Endothelial cell of umbilical vein (primary cell): ENCODE measurements at regions of chr5 and their contacts with region 1.

Region 1: DNA sequence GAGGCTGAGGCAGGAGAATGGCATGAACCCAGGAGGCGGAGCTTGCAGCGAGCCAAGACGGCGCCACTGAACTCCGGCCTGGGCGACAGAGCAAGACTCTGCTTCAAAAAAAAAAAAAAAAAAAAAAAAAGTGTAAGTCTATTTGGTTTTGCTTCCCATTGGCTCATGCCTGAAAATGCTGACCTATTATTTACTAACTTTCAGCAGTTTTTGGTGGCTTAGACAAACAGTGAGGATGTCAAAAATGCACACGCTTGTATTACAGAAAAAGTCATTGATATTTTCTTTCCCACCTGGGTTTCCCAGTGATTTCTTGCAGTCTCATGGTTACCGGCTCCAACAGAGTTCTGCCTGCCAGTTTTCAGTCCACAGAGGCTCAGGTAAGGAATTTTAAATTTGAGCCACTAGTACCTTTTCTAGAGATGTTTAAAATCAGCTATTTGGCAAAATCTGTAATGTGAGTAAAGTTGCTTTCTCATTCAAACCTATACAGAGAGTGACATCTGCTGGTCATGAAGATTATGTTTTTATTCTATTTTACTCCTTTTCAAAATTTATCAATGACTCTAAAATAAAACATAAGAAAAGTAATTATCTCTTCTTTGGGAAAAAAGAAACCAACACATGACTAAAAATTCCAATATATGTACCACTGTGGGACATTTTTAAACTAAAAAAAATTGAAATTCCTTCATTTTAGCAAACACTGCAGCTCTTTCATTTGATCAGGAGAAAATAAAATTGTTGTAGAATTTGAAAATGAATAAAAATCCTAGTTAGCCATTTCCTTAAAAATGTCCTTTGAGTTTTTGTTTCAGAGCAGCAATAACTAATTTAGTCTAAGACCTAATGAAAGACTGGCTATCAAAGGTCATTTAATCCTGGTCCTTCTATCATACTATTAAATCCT is 8.8 kb downstream of the FAM200C start:
- DNase-seq: peak; percentile 30
- H3K4me3 ChIP-seq: no peak overlapping the region
- H3K27ac ChIP-seq: no peak overlapping the region
- H3K4me1 ChIP-seq: no peaks in the 10 kb centered on the region
- H3K27me3 ChIP-seq: no peaks in the 10 kb centered on the region
- CTCF ChIP-seq: peak; percentile 11 to 20
- POLR2A ChIP-seq: no peak

Region 2: GRCh38 chr5:159987031-159987674 is 403.9 kb before region 1 on chr5:
- CTCF ChIA-PET with region 1: interaction called, 13 read pairs
- POLR2A ChIA-PET with region 1: no interaction called
- dilution Hi-C with region 1: no loop called
- intact Hi-C with region 1: no loop called
- DNase-seq: peak; percentile 58
- H3K4me3 ChIP-seq: peak overlapping the region in 2 of 3 experiments; percentile 10 to 15
- H3K27ac ChIP-seq: no peak overlapping the region
- H3K4me1 ChIP-seq: peaks cover 2% of the 10 kb centered on the region
- H3K27me3 ChIP-seq: peaks cover 36 to 37% of the 10 kb centered on the region in 2 experiments
- CTCF ChIP-seq: peak; percentile 62 to 87
- POLR2A ChIP-seq: no peak

Region 3: DNA sequence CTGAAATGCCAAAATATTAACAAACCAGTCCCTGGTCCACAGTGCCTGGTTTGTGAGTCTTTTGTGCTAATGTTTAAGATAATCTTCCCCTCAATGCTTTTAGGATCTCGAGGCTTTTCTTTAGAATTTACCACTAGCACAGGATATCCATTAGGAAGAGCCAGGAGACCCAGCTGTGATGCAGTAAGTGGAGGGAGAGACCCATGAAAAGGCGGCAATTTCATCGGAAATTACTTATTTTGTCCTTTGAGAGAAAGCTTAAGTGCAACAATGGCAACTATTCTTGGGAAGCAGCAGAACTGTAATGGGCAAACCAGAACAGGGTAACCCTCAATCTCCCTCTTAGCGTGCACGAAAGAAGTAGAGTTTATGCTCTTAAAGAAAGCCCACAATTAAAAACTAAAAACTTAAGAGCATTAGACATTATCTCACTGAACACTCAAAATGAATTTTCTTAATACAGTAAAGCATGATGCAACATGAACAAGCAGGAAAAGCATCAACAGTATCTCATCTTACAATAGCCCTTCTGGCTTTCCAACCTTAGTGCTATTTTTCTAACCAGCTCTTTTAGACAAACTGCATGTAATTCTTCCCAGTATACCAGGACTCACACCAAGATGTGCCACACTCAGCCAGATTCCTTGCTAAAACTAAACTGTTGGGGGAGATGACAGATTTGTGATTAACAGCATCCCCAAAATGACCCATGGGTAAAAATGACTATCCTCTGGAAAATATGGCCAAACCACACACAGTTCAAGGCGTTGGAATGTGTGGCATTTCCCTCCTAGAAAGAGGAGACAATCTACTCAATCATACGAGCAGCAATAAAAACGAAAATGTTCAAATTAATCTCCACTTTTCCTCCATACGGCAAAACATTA is 308.2 kb before region 1 on chr5:
- CTCF ChIA-PET with region 1: interaction called, 61 read pairs
- POLR2A ChIA-PET with region 1: interaction called, 5 read pairs
- dilution Hi-C with region 1: no loop called
- intact Hi-C with region 1: loop called (anchors 2 kb)
- DNase-seq: peak; percentile 79
- H3K4me3 ChIP-seq: peak overlapping the region in 1 of 3 experiments; percentile 41
- H3K27ac ChIP-seq: peak overlapping the region; percentile 63
- H3K4me1 ChIP-seq: peaks cover 23% of the 10 kb centered on the region
- H3K27me3 ChIP-seq: no peaks in the 10 kb centered on the region
- CTCF ChIP-seq: no peak
- POLR2A ChIP-seq: no peak

Region 4: GRCh38 chr5:160342403-160342941 is 48.6 kb before region 1 on chr5:
- CTCF ChIA-PET with region 1: interaction called, 21 read pairs
- POLR2A ChIA-PET with region 1: no interaction called
- dilution Hi-C with region 1: no loop called
- intact Hi-C with region 1: no loop called
- DNase-seq: no peak
- H3K4me3 ChIP-seq: no peak overlapping the region
- H3K27ac ChIP-seq: no peak overlapping the region
- H3K4me1 ChIP-seq: no peaks in the 10 kb centered on the region
- H3K27me3 ChIP-seq: no peaks in the 10 kb centered on the region
- CTCF ChIP-seq: no peak
- POLR2A ChIP-seq: no peak

Region 5: DNA sequence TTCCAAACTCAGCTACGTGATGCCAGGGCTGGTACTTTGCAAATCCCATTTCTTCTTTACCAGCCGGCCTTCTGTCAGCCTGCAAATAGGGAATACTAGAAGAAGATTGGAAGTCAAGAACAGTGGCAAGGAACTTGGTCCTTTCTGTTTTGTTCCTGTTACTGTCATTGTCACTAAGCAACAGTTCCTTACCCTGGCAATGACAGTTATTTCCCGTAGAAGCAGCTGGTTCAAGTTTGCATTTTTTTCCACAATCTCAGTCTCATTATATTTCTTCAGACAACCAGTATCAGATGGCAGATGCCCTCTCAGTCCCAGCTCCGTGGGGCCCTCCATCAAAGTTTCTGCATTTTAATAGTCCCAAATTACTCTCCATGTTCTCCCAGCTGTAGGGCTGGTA is 11.5 kb before region 1 on chr5:
- CTCF ChIA-PET with region 1: interaction called, 46 read pairs
- POLR2A ChIA-PET with region 1: no interaction called
- dilution Hi-C with region 1: no loop called
- intact Hi-C with region 1: no loop called
- DNase-seq: no peak
- H3K4me3 ChIP-seq: no peak overlapping the region
- H3K27ac ChIP-seq: no peak overlapping the region
- H3K4me1 ChIP-seq: no peaks in the 10 kb centered on the region
- H3K27me3 ChIP-seq: peaks cover 33 to 36% of the 10 kb centered on the region in 2 experiments
- CTCF ChIP-seq: no peak
- POLR2A ChIP-seq: no peak